CD4-positive, alpha-beta memory T cell (primary cell): ENCODE measurements at regions of chrX and their contacts with region 1.

Region 1: GRCh38 chrX:65985922-65986588 is 53.8 kb downstream of the VSIG4 start:
- DNase-seq: peak; percentile 54 to 82 (median 58)
- H3K4me3 ChIP-seq: no peak overlapping the region
- H3K4me3 Mint-ChIP-seq: peak overlapping the region in 2 of 8 donors; percentile 16 to 21
- H3K27ac ChIP-seq: no peak overlapping the region
- H3K27ac Mint-ChIP-seq: peak overlapping the region in 6 of 7 donors; percentile 34 to 88 (median 58)
- H3K4me1 ChIP-seq: peaks cover 26% of the 10 kb centered on the region
- H3K4me1 Mint-ChIP-seq: peaks cover 15 to 28% (median 24%) of the 10 kb centered on the region in 4 donors
- H3K27me3 ChIP-seq: no peaks in the 10 kb centered on the region
- H3K27me3 Mint-ChIP-seq: no peaks in the 10 kb centered on the region

Region 2: GRCh38 chrX:65581661-65582339 is 404.3 kb before region 1 on chrX:
- CTCF ChIA-PET with region 1: interaction called, 25 read pairs
- POLR2A ChIA-PET with region 1: no interaction called
- intact Hi-C with region 1: loop called (anchors 1 kb)
- DNase-seq: peak; percentile 57 to 69 (median 66)
- H3K4me3 ChIP-seq: no peak overlapping the region
- H3K4me3 Mint-ChIP-seq: no peak overlapping the region
- H3K27ac ChIP-seq: no peak overlapping the region
- H3K27ac Mint-ChIP-seq: peak overlapping the region in 1 of 7 donors; percentile 30
- H3K4me1 ChIP-seq: no peaks in the 10 kb centered on the region
- H3K4me1 Mint-ChIP-seq: peaks cover 0 to 13% (median 5%) of the 10 kb centered on the region in 4 donors
- H3K27me3 ChIP-seq: no peaks in the 10 kb centered on the region
- H3K27me3 Mint-ChIP-seq: no peaks in the 10 kb centered on the region

Region 3: GRCh38 chrX:65750674-65751469 is 235.2 kb before region 1 on chrX:
- CTCF ChIA-PET with region 1: interaction called, 3 read pairs
- POLR2A ChIA-PET with region 1: interaction called, 4 read pairs
- intact Hi-C with region 1: loop called (anchors 5 kb)
- DNase-seq: peak; percentile 47 to 58 (median 50)
- H3K4me3 ChIP-seq: no peak overlapping the region
- H3K4me3 Mint-ChIP-seq: peak overlapping the region; percentile 2 to 87 (median 78)
- H3K27ac ChIP-seq: peak overlapping the region; percentile 35
- H3K27ac Mint-ChIP-seq: peak overlapping the region; percentile 58 to 85 (median 76)
- H3K4me1 ChIP-seq: peaks cover 42% of the 10 kb centered on the region
- H3K4me1 Mint-ChIP-seq: peaks cover 39 to 69% (median 53%) of the 10 kb centered on the region in 4 donors
- H3K27me3 ChIP-seq: no peaks in the 10 kb centered on the region
- H3K27me3 Mint-ChIP-seq: no peaks in the 10 kb centered on the region

Region 4: GRCh38 chrX:65866146-65866545 is 119.9 kb before region 1 on chrX:
- CTCF ChIA-PET with region 1: no interaction called
- POLR2A ChIA-PET with region 1: no interaction called
- intact Hi-C with region 1: loop called (anchors 5 kb)
- DNase-seq: peak; percentile 47 to 69 (median 57)
- H3K4me3 ChIP-seq: no peak overlapping the region
- H3K4me3 Mint-ChIP-seq: peak overlapping the region in 5 of 8 donors; percentile 1 to 47 (median 14)
- H3K27ac ChIP-seq: no peak overlapping the region
- H3K27ac Mint-ChIP-seq: peak overlapping the region; percentile 32 to 90 (median 69)
- H3K4me1 ChIP-seq: peaks cover 37% of the 10 kb centered on the region
- H3K4me1 Mint-ChIP-seq: peaks cover 24 to 53% (median 29%) of the 10 kb centered on the region in 4 donors
- H3K27me3 ChIP-seq: no peaks in the 10 kb centered on the region
- H3K27me3 Mint-ChIP-seq: no peaks in the 10 kb centered on the region